ENCODE measurements at regions of chr3 and their contacts with region 1.

Region 1: GRCh38 chr3:152268555-152269425 is at the start of gene MBNL1:
- DNase-seq: peak; percentile 87 to 90
- ATAC-seq: peak; percentile 85
- H3K4me3 ChIP-seq: peak within 1 kb of the TSS; percentile 80 to 86
- H3K27ac ChIP-seq: peak within 1 kb of the TSS; percentile 69 to 89
- H3K4me1 ChIP-seq: peaks cover 1 to 5% of the 10 kb centered on the region in 2 donors
- H3K27me3 ChIP-seq: no peaks in the 10 kb centered on the region
- total RNA-seq, gene MBNL1: 485 to 689 TPM

Region 2: GRCh38 chr3:151724576-151725562 is 543.9 kb before region 1 on chr3:
- intact Hi-C with region 1: no loop called
- DNase-seq: no peak
- ATAC-seq: no peak
- H3K4me3 ChIP-seq: no peak overlapping the region
- H3K27ac ChIP-seq: no peak overlapping the region
- H3K4me1 ChIP-seq: no peaks in the 10 kb centered on the region
- H3K27me3 ChIP-seq: no peaks in the 10 kb centered on the region

Region 3: GRCh38 chr3:152026033-152026556 is 242.7 kb before region 1 on chr3:
- intact Hi-C with region 1: loop called in 1 of 2 experiments (anchors 5 kb)
- DNase-seq: no peak
- ATAC-seq: no peak
- H3K4me3 ChIP-seq: no peak overlapping the region
- H3K27ac ChIP-seq: no peak overlapping the region
- H3K4me1 ChIP-seq: peaks cover 0 to 6% of the 10 kb centered on the region in 2 donors
- H3K27me3 ChIP-seq: no peaks in the 10 kb centered on the region

Region 4: DNA sequence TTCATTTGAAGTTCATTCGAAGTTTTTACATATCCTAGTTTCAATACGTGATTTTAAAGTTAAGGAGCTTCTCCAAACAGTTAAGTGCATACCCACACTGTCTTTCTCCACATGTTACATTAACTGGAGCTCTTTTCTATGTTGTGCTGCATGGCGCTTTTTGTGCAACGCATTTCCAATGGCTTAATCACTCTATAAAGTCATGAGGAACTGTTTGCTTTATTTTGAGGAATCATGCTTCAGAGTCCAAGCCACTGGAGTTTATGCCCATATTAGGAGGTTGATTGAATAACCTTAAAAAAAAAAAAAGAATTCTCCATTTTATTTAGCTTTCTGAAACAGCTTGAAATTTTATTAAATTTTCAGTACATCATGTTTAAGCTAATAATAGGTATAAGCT is 109.5 kb before region 1 on chr3:
- intact Hi-C with region 1: loop called in 1 of 2 experiments (anchors 1 kb)
- DNase-seq: peak in 1 of 2 donors; percentile 44
- ATAC-seq: peak; percentile 79
- H3K4me3 ChIP-seq: no peak overlapping the region
- H3K27ac ChIP-seq: no peak overlapping the region
- H3K4me1 ChIP-seq: peaks cover 2% of the 10 kb centered on the region in 2 donors
- H3K27me3 ChIP-seq: no peaks in the 10 kb centered on the region

Region 5: DNA sequence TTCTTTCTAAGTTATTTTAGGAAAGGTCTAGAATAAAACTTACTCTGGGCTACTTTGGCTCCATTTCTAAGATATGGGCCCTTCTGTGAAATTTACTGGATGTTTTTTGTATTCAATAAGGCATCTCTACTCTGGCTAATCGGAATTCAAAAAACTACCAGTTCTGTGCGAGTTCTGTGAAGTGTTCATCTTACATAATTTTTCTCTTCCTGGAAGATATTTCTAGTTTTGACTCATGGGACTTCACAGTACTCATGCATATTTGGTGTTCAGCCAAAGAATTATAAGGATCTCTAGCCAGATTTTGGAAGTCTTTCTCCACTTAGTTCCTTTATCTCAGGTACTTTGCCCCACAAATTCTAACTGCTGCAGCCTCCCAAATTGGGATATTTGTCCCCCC is 46.5 kb before region 1 on chr3:
- intact Hi-C with region 1: loop called in 1 of 2 experiments (anchors 5 kb)
- DNase-seq: no peak
- ATAC-seq: peak; percentile 72
- H3K4me3 ChIP-seq: peak overlapping the region in 1 of 2 donors; percentile 41
- H3K27ac ChIP-seq: peak overlapping the region; percentile 33 to 43
- H3K4me1 ChIP-seq: peaks cover 0 to 4% of the 10 kb centered on the region in 2 donors
- H3K27me3 ChIP-seq: no peaks in the 10 kb centered on the region

Region 6: GRCh38 chr3:152322756-152323155 is 54.0 kb after region 1 on chr3:
- intact Hi-C with region 1: loop called in 1 of 2 experiments (anchors 10 kb)
- DNase-seq: no peak
- ATAC-seq: no peak
- H3K4me3 ChIP-seq: no peak overlapping the region
- H3K27ac ChIP-seq: peak overlapping the region; percentile 44 to 82
- H3K4me1 ChIP-seq: peaks cover 0 to 5% of the 10 kb centered on the region in 2 donors
- H3K27me3 ChIP-seq: no peaks in the 10 kb centered on the region